Endothelial cell of umbilical vein (primary cell): ENCODE measurements at regions of chr5 and their contacts with region 1.

Region 1: GRCh38 chr5:171913987-171914273 is 92.5 kb downstream of the FBXW11 start:
- DNase-seq: no peak
- H3K4me3 ChIP-seq: no peak overlapping the region
- H3K27ac ChIP-seq: no peak overlapping the region
- H3K4me1 ChIP-seq: peaks cover 10% of the 10 kb centered on the region
- H3K27me3 ChIP-seq: no peaks in the 10 kb centered on the region
- CTCF ChIP-seq: no peak
- POLR2A ChIP-seq: no peak

Region 2: DNA sequence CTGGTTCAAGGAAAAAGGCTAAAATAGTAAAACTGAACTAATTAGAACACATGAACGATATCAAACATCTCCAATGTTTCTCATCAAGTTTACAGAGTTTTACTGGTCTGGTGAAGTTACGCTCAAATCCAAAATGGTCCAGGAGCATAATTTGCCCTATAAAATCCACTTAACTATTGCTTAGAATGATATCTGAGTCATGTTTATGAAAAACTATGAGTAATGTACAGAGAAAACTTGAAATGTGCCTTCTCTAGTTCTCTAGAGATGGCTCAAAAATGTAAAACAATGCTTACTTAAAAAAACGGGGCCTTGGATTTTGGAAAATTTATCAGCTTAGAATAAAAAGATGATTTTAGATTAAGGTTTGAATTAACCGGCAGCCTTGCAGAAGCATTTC is 15.5 kb before region 1 on chr5:
- CTCF ChIA-PET with region 1: interaction called, 20 read pairs
- POLR2A ChIA-PET with region 1: interaction called, 8 read pairs
- dilution Hi-C with region 1: no loop called
- intact Hi-C with region 1: no loop called
- DNase-seq: no peak
- H3K4me3 ChIP-seq: no peak overlapping the region
- H3K27ac ChIP-seq: no peak overlapping the region
- H3K4me1 ChIP-seq: no peaks in the 10 kb centered on the region
- H3K27me3 ChIP-seq: no peaks in the 10 kb centered on the region
- CTCF ChIP-seq: no peak
- POLR2A ChIP-seq: no peak

Region 3: DNA sequence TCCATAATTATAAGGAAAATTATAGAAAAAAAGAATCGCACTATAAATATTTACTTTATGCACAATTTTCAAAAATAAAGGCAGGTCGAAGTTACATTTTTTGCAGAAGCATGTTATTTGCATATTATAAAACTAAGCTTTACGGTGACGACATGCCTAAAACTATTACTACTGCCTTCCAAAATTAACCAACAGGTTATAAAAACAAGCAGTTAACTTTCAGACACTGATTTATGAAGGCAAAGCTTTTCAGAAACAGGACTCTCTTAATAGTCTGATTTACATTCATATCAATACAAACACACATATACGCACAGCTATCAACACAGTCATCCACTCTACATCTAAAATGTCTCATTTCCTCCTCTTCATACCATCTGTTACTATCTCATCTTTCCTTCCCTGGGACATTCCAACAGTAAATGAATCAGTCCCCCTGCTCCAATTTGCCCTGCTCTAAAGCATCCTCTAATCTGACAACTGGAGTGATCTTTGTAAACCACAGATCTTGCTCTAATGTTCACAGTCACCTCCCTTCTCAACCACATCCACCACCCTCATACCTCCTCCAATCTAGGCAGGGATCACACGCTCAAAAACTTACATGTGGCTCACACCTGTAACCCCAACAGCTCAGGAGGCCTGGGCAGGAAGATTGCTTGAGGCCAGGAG is 71.0 kb after region 1 on chr5:
- CTCF ChIA-PET with region 1: interaction called, 19 read pairs
- POLR2A ChIA-PET with region 1: no interaction called
- dilution Hi-C with region 1: no loop called
- intact Hi-C with region 1: no loop called
- DNase-seq: peak; percentile 63
- H3K4me3 ChIP-seq: no peak overlapping the region
- H3K27ac ChIP-seq: peak overlapping the region; percentile 6
- H3K4me1 ChIP-seq: peaks cover 11% of the 10 kb centered on the region
- H3K27me3 ChIP-seq: no peaks in the 10 kb centered on the region
- CTCF ChIP-seq: no peak
- POLR2A ChIP-seq: no peak

Region 4: DNA sequence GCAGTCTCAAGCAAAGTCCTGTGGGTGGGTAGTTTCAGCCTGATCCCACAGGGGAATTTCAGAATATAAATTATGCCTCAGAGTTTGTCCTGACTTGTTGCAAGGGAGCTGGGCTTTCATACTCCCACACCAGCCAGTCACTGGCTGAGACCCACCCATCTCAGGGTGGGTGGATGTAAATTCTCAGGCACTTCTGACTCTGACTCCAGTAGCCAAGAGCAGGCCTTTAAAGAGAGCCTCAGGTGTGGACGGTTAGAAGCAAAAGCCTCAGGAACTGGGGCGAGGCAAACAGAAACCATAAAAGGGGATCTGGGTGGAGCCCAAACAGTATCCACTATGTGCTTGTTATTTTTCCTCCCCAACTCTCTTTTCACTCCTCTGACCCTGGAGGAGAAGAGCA is 121.1 kb after region 1 on chr5:
- CTCF ChIA-PET with region 1: interaction called, 122 read pairs
- POLR2A ChIA-PET with region 1: interaction called, 7 read pairs
- dilution Hi-C with region 1: no loop called
- intact Hi-C with region 1: loop called (anchors 1 kb)
- DNase-seq: no peak
- H3K4me3 ChIP-seq: no peak overlapping the region
- H3K27ac ChIP-seq: no peak overlapping the region
- H3K4me1 ChIP-seq: no peaks in the 10 kb centered on the region
- H3K27me3 ChIP-seq: peaks cover 5 to 12% of the 10 kb centered on the region in 2 experiments
- CTCF ChIP-seq: no peak
- POLR2A ChIP-seq: no peak

Region 5: GRCh38 chr5:172052450-172053236 is 138.7 kb after region 1 on chr5:
- CTCF ChIA-PET with region 1: interaction called, 32 read pairs
- POLR2A ChIA-PET with region 1: no interaction called
- dilution Hi-C with region 1: no loop called
- intact Hi-C with region 1: no loop called
- DNase-seq: peak; percentile 46
- H3K4me3 ChIP-seq: no peak overlapping the region
- H3K27ac ChIP-seq: no peak overlapping the region
- H3K4me1 ChIP-seq: peaks cover 16% of the 10 kb centered on the region
- H3K27me3 ChIP-seq: no peaks in the 10 kb centered on the region
- CTCF ChIP-seq: no peak
- POLR2A ChIP-seq: no peak

Region 6: GRCh38 chr5:172106511-172107356 is 192.8 kb after region 1 on chr5:
- CTCF ChIA-PET with region 1: interaction called, 11 read pairs
- POLR2A ChIA-PET with region 1: no interaction called
- dilution Hi-C with region 1: no loop called
- intact Hi-C with region 1: loop called (anchors 2 kb)
- DNase-seq: peak; percentile 46
- H3K4me3 ChIP-seq: no peak overlapping the region
- H3K27ac ChIP-seq: no peak overlapping the region
- H3K4me1 ChIP-seq: peaks cover 34% of the 10 kb centered on the region
- H3K27me3 ChIP-seq: no peaks in the 10 kb centered on the region
- CTCF ChIP-seq: peak; percentile 78 to 97
- POLR2A ChIP-seq: no peak

Region 7: DNA sequence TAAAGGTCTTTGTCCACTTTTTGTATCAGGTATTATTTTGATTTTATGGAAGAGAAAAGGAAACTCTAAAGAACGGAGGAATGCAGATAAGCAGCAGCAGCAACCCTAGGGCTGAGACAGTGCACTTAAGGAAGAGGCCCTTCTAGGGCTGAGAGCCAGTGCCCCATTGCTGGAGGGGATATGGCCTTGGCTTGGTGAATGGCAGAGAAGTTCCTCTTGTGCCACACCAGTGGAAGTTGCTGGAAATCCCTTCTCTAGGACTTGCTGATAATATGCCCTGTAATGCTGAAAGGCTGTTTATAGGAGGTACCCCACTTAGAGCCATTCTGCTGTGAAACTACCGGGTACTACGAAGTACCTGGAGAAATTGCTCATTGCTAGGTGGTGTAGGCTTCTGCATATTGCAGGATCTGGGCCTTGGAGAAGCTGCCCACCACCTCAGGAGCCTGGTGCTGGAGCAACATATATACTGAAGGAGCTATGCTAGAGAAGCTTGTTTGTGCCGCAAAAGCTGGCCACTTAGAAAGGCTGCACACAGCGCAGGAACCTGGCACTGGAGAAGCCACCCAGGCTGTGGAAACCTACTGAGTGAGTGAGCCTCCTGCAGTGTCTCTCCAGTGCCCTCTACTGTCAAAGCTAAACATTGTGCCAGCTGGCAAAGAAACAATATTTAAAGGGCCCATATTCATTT is 379.3 kb after region 1 on chr5:
- CTCF ChIA-PET with region 1: interaction called, 27 read pairs
- POLR2A ChIA-PET with region 1: no interaction called
- dilution Hi-C with region 1: no loop called
- intact Hi-C with region 1: loop called (anchors 1 kb)
- DNase-seq: peak; percentile 63
- H3K4me3 ChIP-seq: no peak overlapping the region
- H3K27ac ChIP-seq: no peak overlapping the region
- H3K4me1 ChIP-seq: no peaks in the 10 kb centered on the region
- H3K27me3 ChIP-seq: peaks cover 2 to 7% of the 10 kb centered on the region in 2 experiments
- CTCF ChIP-seq: peak; percentile 81 to 87
- POLR2A ChIP-seq: no peak